ENCODE measurements at regions of chr6 and their contacts with region 1.

Region 1: GRCh38 chr6:144482142-144482541 is 197.0 kb downstream of the UTRN start:
- DNase-seq: peak; percentile 75 to 86 (median 82)
- H3K4me3 ChIP-seq: no peak overlapping the region
- H3K27ac ChIP-seq: no peak overlapping the region
- H3K4me1 ChIP-seq: peaks cover 7% of the 10 kb centered on the region
- H3K27me3 ChIP-seq: no peaks in the 10 kb centered on the region
- CTCF ChIP-seq: peak in 2 of 3 donors; percentile 21 to 43
- EP300 ChIP-seq: no peak
- POLR2A ChIP-seq: no peak

Region 2: GRCh38 chr6:144104898-144105487 is 377.1 kb before region 1 on chr6:
- intact Hi-C with region 1: loop called in 3 of 4 experiments (anchors 5 to 10 kb)
- DNase-seq: no peak
- H3K4me3 ChIP-seq: no peak overlapping the region
- H3K27ac ChIP-seq: no peak overlapping the region
- H3K4me1 ChIP-seq: no peaks in the 10 kb centered on the region
- H3K27me3 ChIP-seq: no peaks in the 10 kb centered on the region
- CTCF ChIP-seq: peak; percentile 41 to 70 (median 55)
- EP300 ChIP-seq: no peak
- POLR2A ChIP-seq: no peak

Region 3: GRCh38 chr6:144548536-144548935 is 66.4 kb after region 1 on chr6:
- intact Hi-C with region 1: no loop called
- DNase-seq: no peak
- H3K4me3 ChIP-seq: no peak overlapping the region
- H3K27ac ChIP-seq: no peak overlapping the region
- H3K4me1 ChIP-seq: no peaks in the 10 kb centered on the region
- H3K27me3 ChIP-seq: no peaks in the 10 kb centered on the region
- CTCF ChIP-seq: no peak
- EP300 ChIP-seq: no peak
- POLR2A ChIP-seq: no peak

Measured in ovary (tissue), 10 donors.